Mammary epithelial cell (primary cell): ENCODE measurements at regions of chr2 and their contacts with region 1.

Region 1: DNA sequence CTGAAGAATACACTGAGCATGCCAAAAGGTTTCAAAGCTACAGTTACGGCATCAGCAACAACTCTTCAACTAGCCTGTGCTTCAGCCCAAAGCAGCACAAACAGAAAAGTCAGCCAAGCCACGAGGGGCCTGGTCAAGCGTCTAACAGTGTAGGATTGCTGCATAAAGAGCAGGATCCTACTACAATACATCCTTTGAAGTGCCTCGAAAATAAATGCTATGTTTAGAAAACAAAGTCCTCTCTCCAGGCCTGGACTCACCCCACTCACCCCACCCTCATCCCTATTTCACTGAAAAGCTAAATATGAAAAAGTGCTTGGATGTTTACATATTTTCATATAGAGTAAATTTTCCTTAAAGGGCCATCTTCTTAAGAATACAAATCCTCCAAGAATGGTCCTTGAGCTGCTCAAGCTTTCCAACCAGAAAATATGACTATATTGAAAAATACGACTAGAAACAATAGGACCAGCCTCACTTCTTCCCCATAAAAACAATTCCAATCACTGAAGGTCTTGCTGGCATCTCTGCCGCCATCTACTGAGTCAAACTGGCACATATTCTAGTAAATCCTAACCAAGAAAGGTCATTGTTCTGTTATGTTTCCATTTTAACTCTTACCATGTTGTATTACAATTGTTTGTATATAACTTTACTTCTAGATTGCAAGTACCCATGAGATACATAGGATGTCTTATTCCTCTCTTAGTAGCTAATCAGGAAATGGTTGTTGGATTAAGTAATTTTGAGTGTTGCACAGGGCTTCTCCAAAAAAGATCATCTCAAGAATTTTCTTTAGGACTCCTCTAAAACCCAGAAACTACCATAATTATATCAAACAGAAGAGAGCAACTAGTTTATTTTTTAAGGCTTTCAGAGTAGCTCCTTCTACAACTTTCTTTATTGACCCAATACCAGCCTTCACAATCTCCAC is 63.6 kb downstream of the CLHC1 start:
- DNase-seq: peak; percentile 52
- H3K4me3 ChIP-seq: no peak overlapping the region
- H3K27ac ChIP-seq: no peak overlapping the region
- H3K4me1 ChIP-seq: peaks cover 4% of the 10 kb centered on the region
- H3K27me3 ChIP-seq: no peaks in the 10 kb centered on the region
- CTCF ChIP-seq: peak; percentile 82 to 84

Region 2: DNA sequence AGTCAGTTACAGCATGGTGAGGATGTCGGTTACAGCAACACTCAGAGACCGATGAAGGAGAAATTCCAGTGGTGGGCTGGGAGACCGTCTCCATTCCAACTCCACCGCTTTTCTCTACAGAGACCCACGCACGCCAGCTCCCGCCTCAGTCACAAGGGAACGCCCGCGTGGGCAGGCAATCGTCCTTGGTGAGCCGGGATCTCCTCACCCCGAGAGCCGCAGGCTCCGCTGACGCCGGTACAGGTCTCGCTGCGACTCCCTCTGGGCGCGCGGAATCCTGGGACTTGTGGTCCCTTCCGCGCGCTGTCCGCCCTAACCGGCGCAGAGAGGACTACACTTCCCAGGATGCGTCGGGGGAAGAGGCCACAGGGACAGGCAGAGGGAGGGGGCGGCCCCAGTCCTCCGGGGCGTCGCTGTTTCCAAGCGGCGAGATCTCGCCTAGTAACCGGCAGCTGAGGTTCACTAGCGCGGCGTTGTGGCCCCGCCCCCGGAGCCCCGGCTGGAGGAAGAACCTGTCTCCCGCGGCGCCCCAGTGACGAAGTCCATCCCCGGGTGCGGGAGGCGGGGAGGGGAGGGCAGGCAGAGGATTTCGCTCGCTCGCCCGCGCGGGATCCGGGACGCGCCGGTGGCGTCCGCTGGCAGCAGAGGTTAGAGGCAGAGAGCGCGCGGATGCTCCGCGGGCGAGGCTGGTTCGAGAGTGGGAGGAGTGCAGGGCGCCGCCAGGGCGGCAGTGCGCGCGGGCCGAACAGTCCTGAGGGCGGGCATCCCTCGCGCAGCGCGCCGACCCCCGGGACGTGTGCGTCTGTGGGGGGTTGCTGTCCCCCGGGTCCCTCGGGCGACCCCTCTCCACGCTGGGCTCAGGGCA is 445.1 kb before region 1 on chr2 and contains the start of gene EML6:
- CTCF ChIA-PET with region 1: no interaction called
- dilution Hi-C with region 1: loop called (anchors 25 kb)
- in situ Hi-C with region 1: no loop called
- intact Hi-C with region 1: no loop called
- DNase-seq: peak; percentile 99
- H3K4me3 ChIP-seq: peak within 1 kb of the TSS; percentile 79 to 88 (median 82)
- H3K27ac ChIP-seq: peak within 1 kb of the TSS; percentile 89
- H3K4me1 ChIP-seq: peaks cover 27% of the 10 kb centered on the region
- H3K27me3 ChIP-seq: no peaks in the 10 kb centered on the region
- CTCF ChIP-seq: peak in 1 of 2 donors; percentile 27
- total RNA-seq, gene EML6: 0.83 to 0.94 TPM

Region 3: DNA sequence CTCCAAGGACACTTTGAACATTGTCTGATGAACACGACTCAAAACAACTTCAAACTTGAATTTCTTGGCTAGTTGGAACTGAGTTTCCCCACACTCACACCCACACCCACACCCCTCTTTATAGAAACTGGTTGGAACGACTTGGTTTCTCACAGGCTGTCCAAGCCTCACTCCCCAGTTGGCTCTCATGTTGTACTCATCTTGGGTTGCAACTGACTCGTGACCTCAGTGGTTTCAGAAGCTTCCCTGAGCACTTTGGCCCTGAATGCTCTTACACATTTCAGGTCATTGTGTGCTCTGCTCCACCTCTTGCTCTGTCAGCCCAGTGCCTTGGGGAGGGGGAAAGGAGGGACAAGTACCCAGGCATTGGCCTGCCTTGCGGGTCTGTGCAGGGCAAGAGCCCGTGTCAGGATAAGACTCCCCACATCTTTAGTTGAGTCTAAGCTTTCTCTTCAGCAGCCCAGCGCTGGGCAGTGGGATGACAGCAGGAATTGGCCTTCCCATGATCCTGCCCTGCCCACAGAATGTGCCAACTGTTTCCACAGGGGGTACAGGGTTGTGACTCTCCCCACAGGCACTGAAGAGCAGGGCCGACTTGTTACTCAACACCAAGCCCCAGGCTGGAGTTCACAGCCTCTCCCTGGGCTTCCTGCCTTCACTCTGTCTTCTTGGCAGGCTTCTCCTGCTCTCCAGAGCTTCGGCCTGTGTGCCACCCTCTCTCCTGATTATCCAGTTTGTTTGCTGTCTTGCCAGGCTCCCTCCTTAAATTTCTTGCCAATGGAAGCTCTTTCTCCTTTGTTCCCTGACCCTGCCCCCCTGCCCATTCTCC is 222.9 kb before region 1 on chr2:
- CTCF ChIA-PET with region 1: no interaction called
- dilution Hi-C with region 1: no loop called
- in situ Hi-C with region 1: no loop called
- intact Hi-C with region 1: no loop called
- DNase-seq: peak; percentile 81
- H3K4me3 ChIP-seq: no peak overlapping the region
- H3K27ac ChIP-seq: no peak overlapping the region
- H3K4me1 ChIP-seq: peaks cover 21% of the 10 kb centered on the region
- H3K27me3 ChIP-seq: no peaks in the 10 kb centered on the region
- CTCF ChIP-seq: no peak

Region 4: GRCh38 chr2:54983345-54984260 is 184.9 kb before region 1 on chr2:
- CTCF ChIA-PET with region 1: no interaction called
- dilution Hi-C with region 1: no loop called
- in situ Hi-C with region 1: no loop called
- intact Hi-C with region 1: loop called (anchors 1 kb)
- DNase-seq: peak; percentile 83
- H3K4me3 ChIP-seq: no peak overlapping the region
- H3K27ac ChIP-seq: peak overlapping the region; percentile 71
- H3K4me1 ChIP-seq: peaks cover 53% of the 10 kb centered on the region
- H3K27me3 ChIP-seq: no peaks in the 10 kb centered on the region
- CTCF ChIP-seq: no peak

Region 5: GRCh38 chr2:55010149-55010591 is 158.3 kb before region 1 on chr2:
- CTCF ChIA-PET with region 1: no interaction called
- dilution Hi-C with region 1: no loop called
- in situ Hi-C with region 1: loop called (anchors 10 kb)
- intact Hi-C with region 1: loop called (anchors 1 kb)
- DNase-seq: peak; percentile 85
- H3K4me3 ChIP-seq: peak overlapping the region; percentile 46 to 52 (median 50)
- H3K27ac ChIP-seq: peak overlapping the region; percentile 85
- H3K4me1 ChIP-seq: peaks cover 63% of the 10 kb centered on the region
- H3K27me3 ChIP-seq: no peaks in the 10 kb centered on the region
- CTCF ChIP-seq: no peak

Region 6: GRCh38 chr2:55014962-55015939 is 153.2 kb before region 1 on chr2:
- CTCF ChIA-PET with region 1: no interaction called
- dilution Hi-C with region 1: no loop called
- in situ Hi-C with region 1: loop called (anchors 10 kb)
- intact Hi-C with region 1: loop called (anchors 1 kb)
- DNase-seq: peak; percentile 57
- H3K4me3 ChIP-seq: peak overlapping the region in 1 of 3 experiments; percentile 7
- H3K27ac ChIP-seq: peak overlapping the region; percentile 22
- H3K4me1 ChIP-seq: peaks cover 63% of the 10 kb centered on the region
- H3K27me3 ChIP-seq: no peaks in the 10 kb centered on the region
- CTCF ChIP-seq: peak; percentile 66 to 76

Region 7: DNA sequence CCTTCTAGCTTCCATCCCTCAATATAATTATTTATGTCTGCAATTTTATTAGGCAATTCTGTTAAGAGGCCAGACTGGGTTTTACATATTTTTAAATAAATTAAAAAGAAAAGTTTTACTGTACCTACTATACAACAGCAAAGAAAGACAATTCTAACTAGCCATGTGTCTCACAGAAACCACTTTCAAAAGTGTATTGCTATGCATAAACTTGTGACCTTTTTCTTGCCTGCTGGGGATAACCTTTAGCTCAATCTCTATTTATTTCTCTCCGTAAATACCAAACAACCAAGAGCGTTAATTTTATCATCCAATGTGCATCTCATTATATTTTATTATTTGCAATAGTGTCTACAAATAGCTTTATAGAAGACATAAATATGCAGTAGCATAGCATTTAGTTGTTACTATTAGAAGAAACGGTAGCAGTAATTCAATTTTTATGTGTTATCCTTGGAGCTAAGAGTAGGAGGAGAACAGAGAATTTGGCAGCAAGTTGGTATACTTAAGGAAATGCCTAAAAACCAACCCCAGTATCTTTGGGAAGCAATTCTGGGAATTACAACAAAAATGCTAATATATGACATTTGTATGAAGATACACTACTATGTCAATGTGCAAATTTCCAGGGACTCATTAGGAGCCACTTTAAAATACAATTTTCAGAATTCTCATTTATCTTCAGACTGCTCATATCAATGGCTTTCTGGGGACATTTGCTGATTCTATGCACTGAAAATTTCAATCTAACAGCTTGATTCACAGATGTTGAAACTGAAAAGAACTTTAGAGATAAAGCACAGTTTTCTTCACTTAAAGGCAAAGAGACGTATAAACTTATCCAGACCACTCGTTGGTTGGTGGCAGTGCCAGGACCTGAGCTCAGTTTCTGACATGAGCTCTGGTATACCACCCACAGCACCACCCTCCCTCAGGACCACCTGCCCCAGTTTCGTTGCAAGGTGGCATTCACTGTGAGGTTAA is 95.2 kb before region 1 on chr2:
- CTCF ChIA-PET with region 1: no interaction called
- dilution Hi-C with region 1: no loop called
- in situ Hi-C with region 1: no loop called
- intact Hi-C with region 1: loop called (anchors 1 kb)
- DNase-seq: no peak
- H3K4me3 ChIP-seq: no peak overlapping the region
- H3K27ac ChIP-seq: no peak overlapping the region
- H3K4me1 ChIP-seq: no peaks in the 10 kb centered on the region
- H3K27me3 ChIP-seq: no peaks in the 10 kb centered on the region
- CTCF ChIP-seq: no peak

Region 8: GRCh38 chr2:55133467-55134315 is 34.8 kb before region 1 on chr2:
- CTCF ChIA-PET with region 1: no interaction called
- dilution Hi-C with region 1: no loop called
- in situ Hi-C with region 1: no loop called
- intact Hi-C with region 1: no loop called
- DNase-seq: peak; percentile 87
- H3K4me3 ChIP-seq: peak overlapping the region; percentile 4 to 31 (median 29)
- H3K27ac ChIP-seq: peak overlapping the region; percentile 34
- H3K4me1 ChIP-seq: peaks cover 5% of the 10 kb centered on the region
- H3K27me3 ChIP-seq: no peaks in the 10 kb centered on the region
- CTCF ChIP-seq: no peak